Caco-2 (cell line): ENCODE measurements at regions of chr10 and their contacts with region 1.

Region 1: DNA sequence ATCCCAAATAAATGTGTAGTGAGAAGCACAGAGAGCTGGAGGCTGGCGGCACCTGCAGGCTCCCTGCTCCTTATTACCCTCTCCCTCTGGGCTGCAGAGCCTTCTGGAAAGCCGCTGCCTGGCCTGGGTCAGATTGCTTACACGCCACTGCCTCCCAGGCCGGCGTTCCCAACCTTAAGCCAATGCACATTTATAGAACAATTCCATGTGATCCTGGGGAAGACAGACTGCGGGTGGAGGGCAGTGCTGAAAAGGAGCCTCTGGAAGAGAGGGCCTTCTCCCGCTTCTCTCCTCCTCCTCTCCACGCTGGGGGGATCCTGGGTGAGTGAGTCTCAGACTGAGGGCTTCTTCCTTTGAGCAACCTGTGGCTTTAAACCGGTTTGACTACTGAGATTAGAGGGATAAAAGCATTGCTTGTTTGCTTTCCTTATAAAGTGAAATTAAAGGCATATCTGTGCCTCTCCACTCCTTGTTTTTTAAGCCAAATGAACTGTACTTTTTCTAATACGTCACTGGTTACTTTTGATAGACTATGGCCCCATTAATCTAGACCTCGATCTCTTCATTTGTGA is 5.5 kb downstream of the TACC2 start:
- DNase-seq: peak; percentile 64 to 73
- H3K4me3 ChIP-seq: peak overlapping the region; percentile 20
- H3K4me3 Mint-ChIP-seq: peak overlapping the region; percentile 80
- H3K27ac Mint-ChIP-seq: peak overlapping the region; percentile 89
- H3K4me1 ChIP-seq: peaks cover 24% of the 10 kb centered on the region
- H3K4me1 Mint-ChIP-seq: peaks cover 26% of the 10 kb centered on the region
- H3K27me3 ChIP-seq: no peaks in the 10 kb centered on the region
- H3K27me3 Mint-ChIP-seq: no peaks in the 10 kb centered on the region
- CTCF ChIP-seq: no peak

Region 2: GRCh38 chr10:121734589-121735045 is 259.9 kb before region 1 on chr10:
- CTCF ChIA-PET with region 1: no interaction called
- POLR2A ChIA-PET with region 1: no interaction called
- intact Hi-C with region 1: no loop called
- DNase-seq: peak in 1 of 2 experiments; percentile 57
- H3K4me3 ChIP-seq: peak overlapping the region; percentile 34
- H3K4me3 Mint-ChIP-seq: peak overlapping the region; percentile 76
- H3K27ac Mint-ChIP-seq: peak overlapping the region; percentile 52
- H3K4me1 ChIP-seq: peaks cover 3% of the 10 kb centered on the region; the same call in 1 of the 2 replicates
- H3K4me1 Mint-ChIP-seq: peaks cover 36% of the 10 kb centered on the region
- H3K27me3 ChIP-seq: no peaks in the 10 kb centered on the region
- H3K27me3 Mint-ChIP-seq: no peaks in the 10 kb centered on the region
- CTCF ChIP-seq: peak; percentile 68 to 82

Region 3: DNA sequence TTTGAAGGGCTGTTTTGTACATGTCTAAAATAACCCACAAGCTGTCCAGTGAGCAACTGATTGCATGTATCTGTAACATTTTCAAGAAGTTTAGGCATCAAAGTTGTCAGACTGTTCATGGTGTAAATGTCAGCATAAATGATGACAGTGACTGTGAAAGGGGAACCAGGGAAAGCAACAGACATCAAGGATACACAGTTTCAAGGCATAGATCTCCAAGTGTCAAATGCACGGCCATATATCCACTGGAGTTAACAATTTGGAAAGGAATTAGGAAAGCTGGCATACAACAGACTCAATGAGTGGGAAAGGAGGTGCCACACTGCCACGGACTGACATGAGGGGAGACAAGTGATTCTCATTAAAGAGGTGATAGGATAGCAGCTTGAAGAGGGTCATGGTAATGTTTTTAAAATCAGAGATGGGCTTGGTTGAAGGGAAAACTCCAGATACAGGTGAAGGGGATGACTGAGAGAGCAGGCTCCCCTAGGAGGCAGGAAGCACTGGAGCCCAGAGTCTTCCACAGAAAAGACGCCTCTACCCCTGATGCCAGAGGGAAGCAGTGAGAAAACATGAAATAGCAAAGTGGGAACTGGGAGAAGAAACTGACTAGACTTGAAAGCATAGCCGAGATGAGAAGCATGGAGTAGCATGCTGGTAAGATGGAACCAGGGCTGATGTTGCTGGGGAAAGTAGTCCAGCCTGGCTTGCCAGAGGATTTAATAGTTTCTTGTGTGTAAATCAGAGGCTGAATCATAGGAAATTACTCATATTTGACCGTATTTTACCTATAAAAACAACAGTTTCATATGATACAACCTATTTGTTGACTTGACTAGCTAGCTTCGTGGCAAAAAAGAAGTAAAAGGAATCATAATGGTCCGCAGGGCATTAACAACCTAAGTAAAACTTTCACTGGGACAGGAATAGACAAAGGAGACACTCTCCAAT is 38.1 kb before region 1 on chr10:
- CTCF ChIA-PET with region 1: no interaction called
- POLR2A ChIA-PET with region 1: no interaction called
- intact Hi-C with region 1: no loop called
- DNase-seq: no peak
- H3K4me3 ChIP-seq: no peak overlapping the region
- H3K4me3 Mint-ChIP-seq: no peak overlapping the region
- H3K27ac Mint-ChIP-seq: no peak overlapping the region
- H3K4me1 ChIP-seq: peaks cover 5% of the 10 kb centered on the region; the same call in 1 of the 2 replicates
- H3K4me1 Mint-ChIP-seq: no peaks in the 10 kb centered on the region
- H3K27me3 ChIP-seq: no peaks in the 10 kb centered on the region
- H3K27me3 Mint-ChIP-seq: no peaks in the 10 kb centered on the region
- CTCF ChIP-seq: no peak

Region 4: GRCh38 chr10:122051251-122051996 is 56.9 kb after region 1 on chr10:
- CTCF ChIA-PET with region 1: no interaction called
- POLR2A ChIA-PET with region 1: no interaction called
- intact Hi-C with region 1: loop called (anchors 2 kb)
- DNase-seq: peak; percentile 73 to 74
- H3K4me3 ChIP-seq: no peak overlapping the region
- H3K4me3 Mint-ChIP-seq: no peak overlapping the region
- H3K27ac Mint-ChIP-seq: no peak overlapping the region
- H3K4me1 ChIP-seq: peaks cover 25% of the 10 kb centered on the region
- H3K4me1 Mint-ChIP-seq: peaks cover 10% of the 10 kb centered on the region
- H3K27me3 ChIP-seq: no peaks in the 10 kb centered on the region
- H3K27me3 Mint-ChIP-seq: no peaks in the 10 kb centered on the region
- CTCF ChIP-seq: peak; percentile 55 to 76